ENCODE measurements at regions of chr14 and their contacts with region 1.

Region 1: GRCh38 chr14:51219473-51220448 is 20.3 kb upstream of the TMX1 start:
- DNase-seq: peak; percentile 47
- H3K4me3 Mint-ChIP-seq: no peak overlapping the region
- H3K27ac Mint-ChIP-seq: no peak overlapping the region
- H3K4me1 Mint-ChIP-seq: no peaks in the 10 kb centered on the region
- H3K27me3 Mint-ChIP-seq: no peaks in the 10 kb centered on the region
- CTCF ChIP-seq: peak; percentile 41

Region 2: DNA sequence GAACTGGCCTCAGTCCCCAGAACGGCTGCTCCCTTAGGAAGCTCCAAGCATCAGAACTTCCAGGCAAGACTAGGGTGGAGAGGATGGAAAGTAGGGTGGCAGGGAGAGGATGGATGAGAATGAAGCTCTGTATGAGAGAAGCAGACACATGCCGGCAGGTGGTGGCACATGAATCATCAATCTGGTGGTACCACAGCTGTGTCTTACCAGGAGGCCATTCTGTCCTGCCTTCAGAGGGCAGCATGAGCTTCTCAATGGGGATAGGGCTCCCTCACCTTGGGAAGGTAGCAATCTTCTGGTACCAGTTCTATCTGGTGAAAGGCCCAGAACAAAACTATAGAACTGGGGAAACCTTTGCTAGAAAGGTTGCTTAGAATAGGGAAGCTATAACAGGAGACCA is 220.0 kb before region 1 on chr14:
- CTCF ChIA-PET with region 1: no interaction called
- POLR2A ChIA-PET with region 1: no interaction called
- intact Hi-C with region 1: loop called (anchors 1 kb)
- DNase-seq: peak; percentile 57
- H3K4me3 Mint-ChIP-seq: no peak overlapping the region
- H3K27ac Mint-ChIP-seq: no peak overlapping the region
- H3K4me1 Mint-ChIP-seq: peaks cover 10% of the 10 kb centered on the region
- H3K27me3 Mint-ChIP-seq: no peaks in the 10 kb centered on the region
- CTCF ChIP-seq: no peak

Region 3: GRCh38 chr14:51157012-51157411 is 62.7 kb before region 1 on chr14:
- CTCF ChIA-PET with region 1: interaction called, 5 read pairs
- POLR2A ChIA-PET with region 1: no interaction called
- intact Hi-C with region 1: loop called (anchors 1 kb)
- DNase-seq: peak; percentile 44
- H3K4me3 Mint-ChIP-seq: no peak overlapping the region
- H3K27ac Mint-ChIP-seq: no peak overlapping the region
- H3K4me1 Mint-ChIP-seq: no peaks in the 10 kb centered on the region
- H3K27me3 Mint-ChIP-seq: no peaks in the 10 kb centered on the region
- CTCF ChIP-seq: peak; percentile 33

Region 4: GRCh38 chr14:51310505-51310944 is 90.8 kb after region 1 on chr14:
- CTCF ChIA-PET with region 1: no interaction called
- POLR2A ChIA-PET with region 1: no interaction called
- intact Hi-C with region 1: no loop called
- DNase-seq: no peak
- H3K4me3 Mint-ChIP-seq: no peak overlapping the region
- H3K27ac Mint-ChIP-seq: no peak overlapping the region
- H3K4me1 Mint-ChIP-seq: no peaks in the 10 kb centered on the region
- H3K27me3 Mint-ChIP-seq: no peaks in the 10 kb centered on the region
- CTCF ChIP-seq: no peak

Measured in MCF 10A (cell line).